ENCODE measurements at regions of chr13 and their contacts with region 1.

Region 1: GRCh38 chr13:113364311-113364889 is 470 bp upstream of the GRTP1 start:
- DNase-seq: no peak
- ATAC-seq: peak; percentile 18 to 23
- H3K4me3 ChIP-seq: peak overlapping the region; percentile 63 to 78 (median 72)
- H3K27ac ChIP-seq: peak overlapping the region; percentile 81 to 94 (median 90)
- H3K4me1 ChIP-seq: peaks cover 0 to 16% of the 10 kb centered on the region in 2 donors
- H3K27me3 ChIP-seq: no peaks in the 10 kb centered on the region
- CTCF ChIP-seq: no peak
- POLR2A ChIP-seq: peak; percentile 13 to 20

Region 2: GRCh38 chr13:113208424-113209335 is 155.7 kb before region 1 on chr13 and contains the start of gene PCID2:
- in situ Hi-C with region 1: no loop called
- intact Hi-C with region 1: loop called (anchors 5 kb)
- DNase-seq: peak; percentile 80 to 86
- ATAC-seq: peak; percentile 79 to 81
- H3K4me3 ChIP-seq: peak within 1 kb of the TSS; percentile 77 to 99 (median 90)
- H3K27ac ChIP-seq: peak within 1 kb of the TSS; percentile 94 to 100 (median 100)
- H3K4me1 ChIP-seq: peaks cover 74 to 75% of the 10 kb centered on the region in 2 donors
- H3K27me3 ChIP-seq: no peaks in the 10 kb centered on the region
- CTCF ChIP-seq: no peak
- POLR2A ChIP-seq: peak; percentile 77 to 83
- total RNA-seq, gene PCID2: 26.4 to 45.6 (median 28.0) TPM

Region 3: DNA sequence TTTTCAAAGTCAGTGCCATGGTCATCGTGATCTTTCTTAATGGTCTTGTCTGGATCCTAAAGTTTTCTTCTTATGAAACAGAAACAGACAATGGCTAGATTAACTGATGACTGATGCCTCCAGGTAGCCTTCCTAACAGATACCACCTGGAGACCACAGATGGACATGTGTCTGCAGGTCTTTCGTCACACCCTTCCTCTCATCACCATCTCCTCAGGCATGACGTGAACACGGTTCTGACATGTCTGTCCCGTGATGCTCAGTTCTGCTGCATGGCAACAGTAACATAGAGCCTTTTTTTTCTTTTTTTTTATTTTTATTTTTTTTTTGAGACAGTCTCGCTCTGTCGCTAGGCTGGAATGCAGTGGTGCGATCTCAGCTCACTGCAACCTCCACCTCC is 80.5 kb before region 1 on chr13:
- in situ Hi-C with region 1: no loop called
- intact Hi-C with region 1: loop called (anchors 5 kb)
- DNase-seq: no peak
- ATAC-seq: no peak
- H3K4me3 ChIP-seq: no peak overlapping the region
- H3K27ac ChIP-seq: no peak overlapping the region
- H3K4me1 ChIP-seq: no peaks in the 10 kb centered on the region
- H3K27me3 ChIP-seq: no peaks in the 10 kb centered on the region
- CTCF ChIP-seq: no peak
- POLR2A ChIP-seq: no peak